ENCODE measurements at regions of chr3 and their contacts with region 1.

Region 1: GRCh38 chr3:141360888-141361598 is 7.3 kb upstream of the ZBTB38 start:
- DNase-seq: peak; percentile 42
- ATAC-seq: peak; percentile 65
- H3K4me3 Mint-ChIP-seq: no peak overlapping the region
- H3K27ac Mint-ChIP-seq: no peak overlapping the region
- H3K4me1 Mint-ChIP-seq: peaks cover 11% of the 10 kb centered on the region
- H3K27me3 Mint-ChIP-seq: peaks cover 10% of the 10 kb centered on the region

Region 2: GRCh38 chr3:141201122-141201521 is 159.9 kb before region 1 on chr3:
- CTCF ChIA-PET with region 1: no interaction called
- POLR2A ChIA-PET with region 1: no interaction called
- DNase-seq: no peak
- ATAC-seq: no peak
- H3K4me3 Mint-ChIP-seq: no peak overlapping the region
- H3K27ac Mint-ChIP-seq: no peak overlapping the region
- H3K4me1 Mint-ChIP-seq: no peaks in the 10 kb centered on the region
- H3K27me3 Mint-ChIP-seq: peaks cover 44% of the 10 kb centered on the region

Region 3: GRCh38 chr3:141231101-141231935 is 129.7 kb before region 1 on chr3 and contains the start of gene PXYLP1:
- CTCF ChIA-PET with region 1: interaction called, 12 read pairs
- POLR2A ChIA-PET with region 1: no interaction called
- DNase-seq: peak; percentile 93
- ATAC-seq: peak; percentile 94
- H3K4me3 Mint-ChIP-seq: peak within 1 kb of the TSS; percentile 87
- H3K27ac Mint-ChIP-seq: peak within 1 kb of the TSS; percentile 96
- H3K4me1 Mint-ChIP-seq: peaks cover 50% of the 10 kb centered on the region
- H3K27me3 Mint-ChIP-seq: no peaks in the 10 kb centered on the region
- total RNA-seq, gene PXYLP1: 15.0 to 16.5 TPM

Region 4: DNA sequence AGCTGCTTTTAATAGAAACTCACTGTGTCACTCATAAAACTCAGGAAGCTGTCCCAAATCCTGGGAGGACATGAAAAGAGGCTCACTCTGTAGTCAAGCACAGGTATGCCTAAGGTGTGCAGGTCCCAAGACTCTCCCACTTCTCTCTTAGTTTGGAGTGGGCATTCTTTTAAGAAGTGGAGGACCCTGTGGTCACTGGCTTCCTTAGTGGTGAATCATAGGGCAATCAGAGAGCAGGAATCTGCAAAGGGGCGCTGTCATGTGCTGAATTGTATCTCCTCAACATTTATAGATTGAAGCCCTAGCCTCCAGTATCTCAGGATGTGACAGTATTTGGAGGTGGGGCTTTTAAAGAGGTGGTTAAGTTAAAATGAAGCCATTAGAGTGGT is 39.9 kb before region 1 on chr3:
- CTCF ChIA-PET with region 1: interaction called, 55 read pairs
- POLR2A ChIA-PET with region 1: no interaction called
- DNase-seq: no peak
- ATAC-seq: peak; percentile 39
- H3K4me3 Mint-ChIP-seq: no peak overlapping the region
- H3K27ac Mint-ChIP-seq: peak overlapping the region; percentile 71
- H3K4me1 Mint-ChIP-seq: peaks cover 16% of the 10 kb centered on the region
- H3K27me3 Mint-ChIP-seq: no peaks in the 10 kb centered on the region

Region 5: DNA sequence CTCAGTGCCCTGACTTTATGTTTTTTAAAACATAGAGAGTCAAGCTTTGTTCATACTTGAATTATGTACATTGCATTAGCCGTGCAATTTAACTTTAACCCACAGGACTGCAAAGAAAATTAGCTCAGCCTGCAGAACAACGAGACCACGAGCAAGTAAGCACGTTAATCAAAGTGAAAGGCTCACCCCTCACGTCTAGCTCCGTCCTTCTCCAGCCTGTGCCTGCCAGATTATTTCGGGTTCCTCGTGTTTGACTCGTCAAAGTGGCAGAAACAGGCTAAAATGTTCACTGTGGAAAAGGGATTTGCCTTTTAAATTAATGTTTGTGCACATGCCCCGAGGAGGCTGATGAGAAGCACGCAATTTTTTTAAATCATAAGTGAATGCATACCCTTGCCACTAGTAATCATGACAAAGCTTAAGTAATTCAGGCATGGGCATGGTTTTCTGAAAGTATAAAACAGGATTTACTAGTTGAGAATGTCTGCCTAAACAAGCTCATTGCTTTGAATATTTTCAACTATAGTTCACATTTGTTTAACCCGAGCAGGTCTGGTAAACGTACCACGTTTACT is 22.6 kb after region 1 on chr3:
- CTCF ChIA-PET with region 1: interaction called, 11 read pairs
- POLR2A ChIA-PET with region 1: no interaction called
- DNase-seq: no peak
- ATAC-seq: no peak
- H3K4me3 Mint-ChIP-seq: no peak overlapping the region
- H3K27ac Mint-ChIP-seq: no peak overlapping the region
- H3K4me1 Mint-ChIP-seq: peaks cover 11% of the 10 kb centered on the region
- H3K27me3 Mint-ChIP-seq: peaks cover 18% of the 10 kb centered on the region

Region 6: DNA sequence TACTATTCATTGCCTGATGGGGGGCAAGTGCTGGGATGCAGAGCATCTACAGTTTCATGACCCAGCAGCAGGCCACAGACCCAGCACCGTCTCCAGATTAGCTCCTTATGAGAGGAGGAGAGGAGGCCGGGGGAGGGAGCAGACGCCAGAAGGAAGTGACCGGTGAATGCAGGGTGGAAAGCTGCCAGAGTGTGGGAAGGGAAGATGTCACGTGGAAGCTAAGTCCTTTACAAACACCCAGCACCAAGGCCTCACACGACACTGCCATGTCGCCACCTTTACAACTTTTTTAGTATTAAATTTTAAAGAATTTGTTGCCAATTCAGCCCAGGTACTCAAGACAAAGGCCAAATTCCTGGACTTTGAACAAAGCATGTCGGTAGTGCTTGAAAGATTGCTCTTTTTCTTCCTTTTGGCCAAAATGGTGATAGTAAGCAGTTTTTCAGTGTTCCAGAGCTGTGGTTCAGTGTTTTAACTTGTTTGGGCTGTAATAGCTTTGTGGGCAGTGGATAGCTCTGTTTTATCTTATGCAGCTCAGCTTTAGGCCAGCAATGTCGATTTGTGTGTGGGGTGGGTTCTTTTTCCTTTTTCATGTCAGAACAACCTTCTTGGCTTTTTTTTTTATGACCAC is 65.5 kb after region 1 on chr3:
- CTCF ChIA-PET with region 1: interaction called, 16 read pairs
- POLR2A ChIA-PET with region 1: no interaction called
- DNase-seq: no peak
- ATAC-seq: no peak
- H3K4me3 Mint-ChIP-seq: no peak overlapping the region
- H3K27ac Mint-ChIP-seq: no peak overlapping the region
- H3K4me1 Mint-ChIP-seq: peaks cover 6% of the 10 kb centered on the region
- H3K27me3 Mint-ChIP-seq: no peaks in the 10 kb centered on the region

Region 7: DNA sequence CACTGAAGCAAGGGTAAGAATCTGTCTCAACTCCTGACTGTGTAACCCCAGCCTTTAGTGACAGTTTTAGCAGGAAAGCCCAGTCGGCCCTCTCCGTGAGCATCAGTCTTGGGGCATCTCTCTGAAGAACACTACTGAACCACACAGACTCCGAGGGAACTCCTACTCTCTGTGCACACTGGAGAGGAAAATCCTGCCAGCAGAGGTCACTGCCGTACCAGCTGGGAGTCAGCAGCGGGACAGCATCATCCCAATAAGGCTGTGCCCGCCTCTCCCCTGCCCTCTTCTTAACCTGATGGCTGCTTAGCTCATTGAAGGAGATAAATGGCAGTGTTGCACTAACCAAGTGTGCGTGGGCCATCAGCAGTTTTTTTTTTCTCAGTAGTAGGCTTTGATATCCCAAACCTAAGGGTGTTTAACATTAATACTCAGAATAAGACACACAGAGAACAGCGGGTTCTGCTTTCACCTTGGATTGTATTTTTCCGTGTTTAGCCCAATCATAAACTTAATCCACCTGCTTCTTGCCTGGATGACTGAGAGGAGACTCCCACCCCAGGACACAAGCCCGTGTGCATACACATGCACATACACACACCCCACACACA is 99.2 kb after region 1 on chr3:
- CTCF ChIA-PET with region 1: interaction called, 185 read pairs
- POLR2A ChIA-PET with region 1: no interaction called
- DNase-seq: peak; percentile 93
- ATAC-seq: peak; percentile 100
- H3K4me3 Mint-ChIP-seq: no peak overlapping the region
- H3K27ac Mint-ChIP-seq: no peak overlapping the region
- H3K4me1 Mint-ChIP-seq: peaks cover 20% of the 10 kb centered on the region
- H3K27me3 Mint-ChIP-seq: no peaks in the 10 kb centered on the region

Region 8: DNA sequence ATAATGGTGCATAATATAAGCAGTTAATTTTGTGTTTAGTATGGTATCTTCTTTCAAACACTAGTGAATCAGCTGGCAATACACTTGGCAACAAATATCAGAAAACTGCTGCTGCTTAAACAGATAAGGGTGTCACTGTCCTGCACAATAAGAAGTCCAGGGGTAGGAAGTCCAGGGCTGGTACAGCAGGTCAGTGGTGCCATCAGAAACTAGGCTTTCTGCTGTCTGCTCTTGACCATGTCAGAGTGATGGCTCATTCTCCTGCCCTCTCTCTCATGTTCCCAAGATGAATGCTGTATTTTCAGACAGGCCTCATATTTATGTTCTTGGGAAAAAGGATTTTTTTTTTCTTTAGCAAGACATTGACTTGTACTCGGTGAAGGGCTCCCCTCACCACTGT is 393.0 kb after region 1 on chr3:
- CTCF ChIA-PET with region 1: no interaction called
- POLR2A ChIA-PET with region 1: no interaction called
- DNase-seq: no peak
- ATAC-seq: no peak
- H3K4me3 Mint-ChIP-seq: no peak overlapping the region
- H3K27ac Mint-ChIP-seq: no peak overlapping the region
- H3K4me1 Mint-ChIP-seq: no peaks in the 10 kb centered on the region
- H3K27me3 Mint-ChIP-seq: no peaks in the 10 kb centered on the region

Region 9: GRCh38 chr3:142337994-142338393 is 977.0 kb after region 1 on chr3:
- CTCF ChIA-PET with region 1: no interaction called
- POLR2A ChIA-PET with region 1: no interaction called
- DNase-seq: no peak
- ATAC-seq: no peak
- H3K4me3 Mint-ChIP-seq: no peak overlapping the region
- H3K27ac Mint-ChIP-seq: no peak overlapping the region
- H3K4me1 Mint-ChIP-seq: peaks cover 2% of the 10 kb centered on the region
- H3K27me3 Mint-ChIP-seq: no peaks in the 10 kb centered on the region